ENCODE measurements at regions of chr1 and their contacts with region 1.

Region 1: GRCh38 chr1:11907275-11908094 is 18.7 kb downstream of the KIAA2013 start:
- DNase-seq: peak; percentile 95
- ATAC-seq: peak; percentile 57
- H3K4me3 Mint-ChIP-seq: peak overlapping the region; percentile 81
- H3K27ac Mint-ChIP-seq: peak overlapping the region; percentile 99
- H3K4me1 Mint-ChIP-seq: peaks cover 37% of the 10 kb centered on the region
- H3K27me3 Mint-ChIP-seq: peaks cover 12% of the 10 kb centered on the region

Region 2: DNA sequence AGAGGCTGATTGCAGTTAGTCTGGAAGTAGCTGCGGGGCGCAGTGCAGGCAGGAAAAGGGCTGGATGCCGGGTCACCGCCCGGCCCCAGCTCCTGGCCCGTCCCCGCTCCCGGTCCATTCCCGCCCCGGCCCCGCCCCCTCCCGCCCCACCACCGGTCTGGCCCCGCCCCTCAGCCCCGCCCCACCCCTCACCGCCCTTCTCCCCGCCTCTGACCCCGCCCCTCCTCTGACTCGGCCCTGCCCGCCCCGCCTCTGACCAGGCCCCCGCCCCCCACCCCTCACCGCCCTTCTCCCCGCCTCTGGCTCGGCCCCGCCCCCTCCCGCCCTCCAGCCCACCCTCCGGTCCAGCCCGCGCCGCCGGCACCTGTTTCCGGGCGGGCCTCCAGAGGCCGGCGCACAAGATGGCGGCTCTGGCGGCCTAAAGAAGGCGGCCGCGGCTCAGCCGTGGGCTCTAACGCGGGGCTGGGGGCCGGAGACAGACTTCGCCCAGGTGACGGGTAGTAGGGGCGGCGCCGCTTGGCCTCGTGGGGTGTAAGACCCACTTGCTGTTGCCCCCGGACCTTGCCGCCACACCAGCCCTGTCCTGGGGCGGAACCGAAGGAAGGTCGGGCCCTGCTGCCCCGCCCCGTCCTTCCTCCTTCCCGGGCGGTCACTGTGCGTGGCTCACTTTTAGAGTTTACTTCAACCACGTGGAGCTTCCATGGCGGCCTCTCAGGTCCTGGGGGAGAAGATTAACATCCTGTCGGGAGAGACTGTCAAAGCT is 634.5 kb before region 1 on chr1 and contains the start of gene UBIAD1:
- CTCF ChIA-PET with region 1: no interaction called
- POLR2A ChIA-PET with region 1: interaction called, 4 read pairs
- intact Hi-C with region 1: loop called in 1 of 2 experiments (anchors 2 kb)
- DNase-seq: peak; percentile 95
- ATAC-seq: peak; percentile 84
- H3K4me3 Mint-ChIP-seq: peak within 1 kb of the TSS; percentile 95
- H3K27ac Mint-ChIP-seq: peak within 1 kb of the TSS; percentile 91
- H3K4me1 Mint-ChIP-seq: peaks cover 29% of the 10 kb centered on the region
- H3K27me3 Mint-ChIP-seq: no peaks in the 10 kb centered on the region
- total RNA-seq, gene UBIAD1: 29.2 to 32.0 TPM

Region 3: GRCh38 chr1:11805447-11806306 is 101.8 kb before region 1 on chr1 and contains the starts of genes CLCN6 and MTHFR:
- CTCF ChIA-PET with region 1: interaction called, 7 read pairs
- POLR2A ChIA-PET with region 1: interaction called, 46 read pairs
- intact Hi-C with region 1: loop called in 1 of 2 experiments (anchors 1 kb)
- DNase-seq: peak; percentile 99
- ATAC-seq: peak; percentile 91
- H3K4me3 Mint-ChIP-seq: peak within 1 kb of the TSS; percentile 87
- H3K27ac Mint-ChIP-seq: peak within 1 kb of the TSS; percentile 87
- H3K4me1 Mint-ChIP-seq: peaks cover 57% of the 10 kb centered on the region
- H3K27me3 Mint-ChIP-seq: no peaks in the 10 kb centered on the region
- total RNA-seq, gene CLCN6: 9.4 to 9.5 TPM
- total RNA-seq, gene MTHFR: 11.2 to 11.6 TPM

Region 4: GRCh38 chr1:11925938-11926292 is 18.4 kb after region 1 on chr1:
- CTCF ChIA-PET with region 1: no interaction called
- POLR2A ChIA-PET with region 1: interaction called, 67 read pairs
- intact Hi-C with region 1: loop called (anchors 1 kb)
- DNase-seq: no peak
- ATAC-seq: peak; percentile 21
- H3K4me3 Mint-ChIP-seq: peak overlapping the region; percentile 77
- H3K27ac Mint-ChIP-seq: no peak overlapping the region
- H3K4me1 Mint-ChIP-seq: peaks cover 30% of the 10 kb centered on the region
- H3K27me3 Mint-ChIP-seq: no peaks in the 10 kb centered on the region

Region 5: GRCh38 chr1:12019858-12020509 is 112.5 kb after region 1 on chr1:
- CTCF ChIA-PET with region 1: no interaction called
- POLR2A ChIA-PET with region 1: interaction called, 27 read pairs
- intact Hi-C with region 1: loop called in 1 of 2 experiments (anchors 1 kb)
- DNase-seq: no peak
- ATAC-seq: no peak
- H3K4me3 Mint-ChIP-seq: peak overlapping the region; percentile 83
- H3K27ac Mint-ChIP-seq: peak overlapping the region; percentile 74
- H3K4me1 Mint-ChIP-seq: peaks cover 2% of the 10 kb centered on the region
- H3K27me3 Mint-ChIP-seq: no peaks in the 10 kb centered on the region

Region 6: DNA sequence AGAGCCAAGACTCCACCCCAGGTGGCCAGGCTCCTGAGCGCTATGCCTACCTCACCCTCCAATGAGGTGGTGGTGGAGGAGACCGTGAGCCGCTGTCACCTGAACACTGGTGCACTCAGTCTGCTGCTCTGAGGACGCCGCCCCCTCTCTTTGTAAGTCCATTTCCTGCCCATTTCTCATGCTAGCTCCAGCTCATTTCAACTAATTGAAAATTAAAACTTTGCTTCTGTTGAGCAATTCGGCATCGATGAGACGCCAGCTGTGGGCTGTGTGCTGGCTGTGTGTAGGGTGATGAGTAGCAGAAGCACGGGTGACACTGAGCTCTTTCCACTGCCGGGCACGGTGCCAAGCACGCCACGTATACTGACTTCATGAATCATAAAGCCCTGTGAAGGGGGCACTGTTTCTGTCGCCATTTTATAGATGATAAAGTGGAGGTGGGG is 270.5 kb after region 1 on chr1:
- CTCF ChIA-PET with region 1: no interaction called
- POLR2A ChIA-PET with region 1: interaction called, 36 read pairs
- intact Hi-C with region 1: loop called (anchors 2 to 5 kb)
- DNase-seq: peak; percentile 97
- ATAC-seq: peak; percentile 78
- H3K4me3 Mint-ChIP-seq: peak overlapping the region; percentile 63
- H3K27ac Mint-ChIP-seq: peak overlapping the region; percentile 96
- H3K4me1 Mint-ChIP-seq: peaks cover 86% of the 10 kb centered on the region
- H3K27me3 Mint-ChIP-seq: no peaks in the 10 kb centered on the region

Measured in activated CD4-positive, alpha-beta T cell treated with anti-CD3 and anti-CD28 coated beads for 36 hours (primary cell).